ENCODE measurements at regions of chr20 and their contacts with region 1.

Region 1: GRCh38 chr20:50464026-50464724 is 46.0 kb upstream of the PTPN1 start:
- DNase-seq: peak; percentile 70
- ATAC-seq: peak; percentile 77
- H3K4me3 Mint-ChIP-seq: peak overlapping the region; percentile 28
- H3K27ac Mint-ChIP-seq: no peak overlapping the region
- H3K4me1 Mint-ChIP-seq: peaks cover 20% of the 10 kb centered on the region
- H3K27me3 Mint-ChIP-seq: peaks cover 3% of the 10 kb centered on the region

Region 2: DNA sequence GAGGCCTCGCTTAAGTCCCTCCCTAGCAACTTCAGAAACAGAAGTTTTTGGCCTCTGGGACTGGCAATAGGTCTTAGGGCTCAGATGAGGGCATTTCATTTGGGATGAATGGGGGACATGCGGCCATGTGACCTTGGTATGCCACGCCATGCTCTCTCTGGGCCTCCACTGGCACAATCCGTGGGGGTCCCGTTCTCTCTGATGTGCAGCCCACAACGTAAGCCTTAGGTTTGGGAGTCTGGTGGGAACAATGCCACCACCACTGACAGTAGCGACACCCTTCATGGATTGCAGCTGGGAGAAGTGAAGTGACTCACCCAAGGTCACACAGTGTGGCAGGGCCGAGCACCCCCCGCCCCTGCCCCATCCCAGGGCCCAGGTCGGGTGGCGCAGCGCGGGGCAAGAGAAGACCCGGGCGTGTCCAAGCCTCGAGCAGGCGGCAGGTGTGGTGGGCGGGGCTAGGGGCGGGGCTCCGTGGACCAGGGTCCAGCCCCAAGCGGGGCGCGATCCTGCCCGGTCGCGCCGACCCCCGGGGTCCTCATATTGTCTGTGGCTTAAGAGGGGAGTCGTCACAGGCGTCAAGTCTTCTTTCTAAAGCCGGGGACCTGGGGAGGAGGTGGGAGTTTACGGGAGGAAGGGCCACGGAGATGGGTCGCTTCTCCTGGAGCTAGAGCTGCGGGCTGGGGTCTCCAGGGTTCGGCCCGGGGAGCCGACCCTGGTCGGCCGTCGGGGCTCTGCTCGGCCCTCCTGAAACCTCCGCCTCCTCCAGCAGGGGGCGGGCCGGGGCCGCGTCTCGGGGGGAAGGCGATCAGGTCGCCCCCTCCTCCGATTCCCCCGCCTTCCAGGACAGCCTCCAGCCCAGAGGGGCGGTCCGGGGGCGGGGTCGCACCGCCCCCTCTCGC is 274.2 kb before region 1 on chr20:
- POLR2A ChIA-PET with region 1: interaction called, 12 read pairs
- DNase-seq: peak; percentile 94
- ATAC-seq: peak; percentile 48
- H3K4me3 Mint-ChIP-seq: peak overlapping the region; percentile 35
- H3K27ac Mint-ChIP-seq: no peak overlapping the region
- H3K4me1 Mint-ChIP-seq: peaks cover 21% of the 10 kb centered on the region
- H3K27me3 Mint-ChIP-seq: peaks cover 6% of the 10 kb centered on the region

Region 3: DNA sequence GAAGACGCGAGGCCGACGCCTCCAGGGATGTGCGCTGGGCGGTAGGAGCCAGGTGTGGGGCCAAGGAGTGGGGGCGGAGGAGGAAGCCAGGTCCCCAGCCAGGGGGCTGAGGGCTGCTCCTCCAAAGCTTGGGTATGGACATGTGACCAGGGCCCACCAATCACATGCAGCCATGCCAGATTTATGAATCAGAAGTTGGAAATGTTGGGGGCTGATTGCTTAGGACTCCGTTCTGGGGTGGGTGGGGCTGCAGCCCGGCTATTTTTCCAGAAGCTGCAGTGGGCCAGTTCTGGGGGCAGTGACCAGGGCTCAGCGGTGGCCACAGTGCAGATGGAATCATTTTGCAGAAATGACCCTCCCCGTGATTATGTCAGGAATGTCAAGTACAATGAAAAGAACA is 177.6 kb before region 1 on chr20:
- POLR2A ChIA-PET with region 1: no interaction called
- DNase-seq: no peak
- ATAC-seq: no peak
- H3K4me3 Mint-ChIP-seq: no peak overlapping the region
- H3K27ac Mint-ChIP-seq: no peak overlapping the region
- H3K4me1 Mint-ChIP-seq: peaks cover 18% of the 10 kb centered on the region
- H3K27me3 Mint-ChIP-seq: peaks cover 20% of the 10 kb centered on the region